Common myeloid progenitor, CD34-positive (primary cell): ENCODE measurements at regions of chr6 and their contacts with region 1.

Region 1: DNA sequence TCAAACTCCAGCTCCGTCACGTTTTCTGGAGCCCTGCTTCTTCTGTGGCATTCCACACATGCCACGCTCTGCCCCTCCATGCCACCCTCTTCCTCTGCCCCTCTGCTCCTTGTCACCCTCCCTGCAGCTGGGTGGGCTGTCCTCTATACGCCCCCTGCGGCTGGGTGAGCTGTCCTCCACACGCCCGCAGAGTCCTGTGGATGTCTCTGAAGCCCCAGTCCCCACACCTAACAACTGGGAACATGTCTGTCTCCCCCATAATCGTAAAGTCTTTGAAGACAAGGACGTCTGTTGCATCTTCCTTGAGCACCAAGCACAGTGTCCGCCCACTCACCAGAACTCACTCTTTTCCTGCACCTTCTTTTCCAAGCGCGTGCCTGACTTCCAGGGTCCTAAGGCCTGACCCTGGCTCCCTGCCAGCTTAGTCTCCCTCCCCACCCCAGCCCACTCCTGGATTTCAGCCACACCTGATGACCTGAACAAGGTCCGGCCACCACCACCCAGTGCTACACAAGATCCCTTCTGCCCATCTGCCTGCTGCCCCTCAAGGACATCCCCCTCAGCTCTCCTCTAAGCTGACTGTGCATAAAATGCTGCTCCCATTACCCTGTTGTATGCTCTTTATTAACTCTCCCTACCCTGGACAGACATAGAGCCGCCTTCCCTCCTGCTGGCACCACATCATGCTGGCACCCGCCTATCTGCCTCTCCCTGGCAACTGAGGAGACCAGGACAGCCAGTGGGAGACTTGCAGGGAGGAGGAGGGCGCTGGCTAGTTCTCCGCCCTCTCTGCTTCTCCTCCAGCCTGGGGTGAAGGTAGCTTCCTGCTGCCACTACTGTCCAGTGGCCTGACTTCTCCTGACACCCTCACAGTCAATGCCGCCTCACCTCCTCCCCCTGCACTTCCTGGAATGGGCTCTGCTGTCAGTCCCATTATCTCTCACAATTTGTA is 10.7 kb upstream of the PRR18 start:
- DNase-seq: no peak
- H3K4me3 ChIP-seq: no peak overlapping the region
- H3K27ac ChIP-seq: no peak overlapping the region
- H3K4me1 ChIP-seq: no peaks in the 10 kb centered on the region
- H3K27me3 ChIP-seq: peaks cover 0 to 3% (median 0%) of the 10 kb centered on the region in 5 experiments

Region 2: GRCh38 chr6:166308033-166308768 is 10.7 kb before region 1 on chr6 and contains the start of gene PRR18:
- CTCF ChIA-PET with region 1: interaction called, 18 read pairs
- POLR2A ChIA-PET with region 1: no interaction called
- DNase-seq: peak in 1 of 3 donors; percentile 37
- H3K4me3 ChIP-seq: peak within 1 kb of the TSS; percentile 22 to 72 (median 53)
- H3K27ac ChIP-seq: no peak within 1 kb of the TSS
- H3K4me1 ChIP-seq: peaks cover 0 to 20% (median 18%) of the 10 kb centered on the region in 4 experiments
- H3K27me3 ChIP-seq: peaks cover 0 to 65% (median 31%) of the 10 kb centered on the region in 5 experiments